ENCODE measurements at regions of chr2 and their contacts with region 1.

Region 1: DNA sequence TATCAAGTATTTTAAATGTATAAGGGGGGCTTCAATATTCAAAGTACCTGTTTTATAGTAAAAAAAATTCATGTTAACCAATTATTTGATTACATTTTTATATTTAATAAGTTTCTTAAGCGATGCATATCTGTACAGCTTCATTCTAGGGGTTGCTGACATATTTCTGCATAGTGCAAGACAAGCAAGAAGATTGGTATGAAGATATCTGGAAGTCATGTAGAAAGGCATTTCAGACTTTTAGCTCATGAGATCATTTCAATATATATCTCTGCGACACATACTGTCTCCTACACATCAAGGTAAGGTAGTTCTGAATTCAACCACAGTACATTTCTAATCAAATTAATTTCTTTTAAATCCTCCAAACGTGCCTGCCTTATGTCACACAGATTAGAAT is 73.1 kb downstream of the MEMO1 start:
- DNase-seq: no peak

Region 2: GRCh38 chr2:31967790-31968189 is 30.0 kb after region 1 on chr2:
- CTCF ChIA-PET with region 1: interaction called, 10 read pairs
- POLR2A ChIA-PET with region 1: no interaction called
- DNase-seq: no peak

Region 3: DNA sequence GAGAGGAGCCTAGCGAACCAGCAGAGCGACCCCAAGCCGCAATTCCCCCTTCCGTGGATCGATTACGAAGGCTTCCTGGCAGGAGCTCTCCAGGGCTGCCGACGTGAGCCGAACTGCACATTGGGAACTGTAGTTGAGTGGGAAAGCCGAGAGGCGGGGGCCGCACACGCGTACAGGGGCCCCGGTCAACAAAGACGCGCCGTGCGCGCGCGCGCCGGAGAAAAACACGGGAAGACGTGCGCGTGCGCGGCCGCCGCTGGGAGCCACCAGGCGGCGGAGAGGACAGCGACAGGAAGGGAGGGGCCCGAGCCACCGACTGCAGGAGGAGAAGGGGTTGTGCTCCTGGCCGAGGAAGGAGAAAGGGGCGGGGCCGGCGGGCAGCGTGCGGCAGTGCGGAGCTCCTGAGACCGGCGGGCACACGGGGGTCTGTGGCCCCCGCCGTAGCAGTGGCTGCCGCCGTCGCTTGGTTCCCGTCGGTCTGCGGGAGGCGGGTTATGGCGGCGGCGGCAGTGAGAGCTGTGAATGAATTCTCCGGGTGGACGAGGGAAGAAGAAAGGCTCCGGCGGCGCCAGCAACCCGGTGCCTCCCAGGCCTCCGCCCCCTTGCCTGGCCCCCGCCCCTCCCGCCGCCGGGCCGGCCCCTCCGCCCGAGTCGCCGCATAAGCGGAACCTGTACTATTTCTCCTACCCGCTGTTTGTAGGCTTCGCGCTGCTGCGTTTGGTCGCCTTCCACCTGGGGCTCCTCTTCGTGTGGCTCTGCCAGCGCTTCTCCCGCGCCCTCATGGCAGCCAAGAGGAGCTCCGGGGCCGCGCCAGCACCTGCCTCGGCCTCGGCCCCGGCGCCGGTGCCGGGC is 125.8 kb after region 1 on chr2 and contains the start of gene SPAST:
- CTCF ChIA-PET with region 1: no interaction called
- POLR2A ChIA-PET with region 1: no interaction called
- DNase-seq: peak; percentile 95